ENCODE measurements at regions of chr12 and their contacts with region 1.

Region 1: DNA sequence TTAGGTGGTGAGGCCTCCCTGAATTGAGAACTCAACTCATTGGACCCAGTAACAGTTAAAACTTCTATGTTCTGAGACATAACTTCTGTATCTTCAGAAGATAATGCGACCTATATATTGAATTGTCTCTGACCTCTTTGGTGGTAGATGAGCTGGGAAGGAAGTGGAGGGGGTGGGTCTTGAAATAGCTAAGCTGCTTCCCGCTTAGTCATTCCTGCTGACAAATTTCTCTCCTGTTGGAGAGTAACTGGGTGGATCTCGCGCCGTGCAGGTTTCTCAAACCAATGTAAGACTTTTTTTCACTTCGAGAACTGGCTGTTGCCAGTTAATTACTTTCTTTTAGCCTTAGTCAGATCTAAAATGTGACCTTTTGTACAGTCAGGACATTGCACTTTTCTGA is 100.8 kb downstream of the PPHLN1 start:
- DNase-seq: no peak
- H3K4me3 Mint-ChIP-seq: no peak overlapping the region
- H3K27ac Mint-ChIP-seq: no peak overlapping the region
- H3K4me1 Mint-ChIP-seq: peaks cover 12% of the 10 kb centered on the region
- H3K27me3 Mint-ChIP-seq: no peaks in the 10 kb centered on the region

Region 2: GRCh38 chr12:42469355-42470175 is 42.8 kb after region 1 on chr12:
- intact Hi-C with region 1: loop called (anchors 5 kb)
- DNase-seq: no peak
- H3K4me3 Mint-ChIP-seq: peak overlapping the region; percentile 63
- H3K27ac Mint-ChIP-seq: peak overlapping the region; percentile 16
- H3K4me1 Mint-ChIP-seq: peaks cover 19% of the 10 kb centered on the region
- H3K27me3 Mint-ChIP-seq: peaks cover 7% of the 10 kb centered on the region

Region 3: DNA sequence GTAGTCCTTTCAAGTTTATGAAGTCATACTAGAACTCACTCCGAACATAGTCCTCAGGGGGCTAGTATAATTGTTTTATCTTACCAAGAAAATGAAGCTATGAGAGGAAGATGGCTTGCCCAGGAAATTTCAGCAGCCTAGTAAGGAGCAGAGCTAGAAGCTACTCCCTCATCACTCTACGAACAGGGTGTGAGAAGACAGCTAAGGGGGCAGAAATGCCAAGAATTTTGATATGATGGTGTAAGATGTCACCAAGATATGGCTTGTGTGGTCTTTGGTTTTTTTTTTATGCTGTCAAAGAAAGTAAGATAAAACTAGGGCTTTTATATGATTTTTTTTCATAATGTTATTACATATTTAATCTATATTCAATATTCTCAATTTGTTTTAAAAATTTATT is 115.2 kb after region 1 on chr12:
- intact Hi-C with region 1: no loop called
- DNase-seq: no peak
- H3K4me3 Mint-ChIP-seq: no peak overlapping the region
- H3K27ac Mint-ChIP-seq: no peak overlapping the region
- H3K4me1 Mint-ChIP-seq: no peaks in the 10 kb centered on the region
- H3K27me3 Mint-ChIP-seq: peaks cover 2% of the 10 kb centered on the region

Region 4: DNA sequence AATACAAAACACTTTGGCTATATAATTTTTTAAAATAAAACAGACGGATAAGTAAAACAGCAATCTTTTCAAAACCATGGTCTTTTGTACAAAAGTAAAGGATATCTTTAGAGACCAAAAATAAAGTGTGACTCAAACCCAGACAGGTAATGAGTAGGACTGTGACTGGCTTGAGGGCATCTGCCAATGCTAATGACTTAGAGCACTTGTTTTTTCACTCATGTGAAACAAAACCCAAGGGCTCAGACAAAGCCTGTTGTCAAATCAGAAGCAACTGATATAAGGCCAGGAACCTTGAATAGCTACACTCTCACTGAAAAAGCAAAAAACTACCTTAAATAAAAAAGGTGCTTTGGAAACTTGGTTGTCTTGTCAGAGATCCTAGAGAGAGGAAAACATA is 1766.5 kb after region 1 on chr12:
- intact Hi-C with region 1: no loop called
- DNase-seq: no peak
- H3K4me3 Mint-ChIP-seq: no peak overlapping the region
- H3K27ac Mint-ChIP-seq: no peak overlapping the region
- H3K4me1 Mint-ChIP-seq: no peaks in the 10 kb centered on the region
- H3K27me3 Mint-ChIP-seq: no peaks in the 10 kb centered on the region